BJ (cell line): ENCODE measurements at regions of chr12 and their contacts with region 1.

Region 1: DNA sequence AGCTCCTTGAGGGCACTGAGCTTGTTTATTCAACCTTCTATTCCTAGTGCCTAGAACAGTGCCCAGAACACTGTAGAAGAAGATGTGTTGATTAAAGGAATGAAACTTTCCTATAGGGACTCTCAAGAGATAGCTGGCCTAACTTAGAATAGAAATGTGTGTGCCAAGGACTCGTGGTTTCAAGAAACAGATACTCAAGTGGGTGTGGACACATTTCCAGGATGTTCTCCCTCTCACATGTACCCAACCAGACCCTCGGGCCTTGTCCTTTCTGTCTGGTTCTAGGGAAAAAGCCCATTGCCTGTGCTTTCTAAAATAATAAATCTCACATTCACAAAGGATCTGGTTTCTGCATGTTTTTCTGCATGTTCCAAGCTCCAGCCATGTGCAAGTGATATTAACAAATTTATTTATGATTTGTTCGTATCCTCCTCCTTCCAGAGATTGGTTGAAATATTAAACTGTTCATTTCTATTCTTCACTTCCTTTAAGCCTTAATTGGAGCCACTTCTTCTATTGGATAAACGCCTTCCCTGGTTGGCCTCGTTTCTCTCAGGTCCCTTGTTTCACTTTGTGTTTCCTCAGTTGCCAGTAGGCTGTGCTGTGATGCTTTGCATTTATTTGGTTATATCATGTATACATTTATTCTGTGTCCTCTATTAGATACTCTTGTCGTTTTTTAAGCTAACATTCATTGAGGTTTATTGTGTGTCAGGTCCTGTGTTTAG is 89.8 kb downstream of the CRADD start:
- DNase-seq: no peak
- H3K4me3 ChIP-seq: no peak overlapping the region
- H3K27me3 ChIP-seq: no peaks in the 10 kb centered on the region
- CTCF ChIP-seq: peak; percentile 58

Region 2: GRCh38 chr12:93569656-93570551 is 197.1 kb before region 1 on chr12:
- CTCF ChIA-PET with region 1: interaction called, 21 read pairs
- POLR2A ChIA-PET with region 1: no interaction called
- DNase-seq: no peak
- H3K4me3 ChIP-seq: peak overlapping the region; percentile 93
- H3K27me3 ChIP-seq: no peaks in the 10 kb centered on the region
- CTCF ChIP-seq: peak; percentile 93

Region 3: DNA sequence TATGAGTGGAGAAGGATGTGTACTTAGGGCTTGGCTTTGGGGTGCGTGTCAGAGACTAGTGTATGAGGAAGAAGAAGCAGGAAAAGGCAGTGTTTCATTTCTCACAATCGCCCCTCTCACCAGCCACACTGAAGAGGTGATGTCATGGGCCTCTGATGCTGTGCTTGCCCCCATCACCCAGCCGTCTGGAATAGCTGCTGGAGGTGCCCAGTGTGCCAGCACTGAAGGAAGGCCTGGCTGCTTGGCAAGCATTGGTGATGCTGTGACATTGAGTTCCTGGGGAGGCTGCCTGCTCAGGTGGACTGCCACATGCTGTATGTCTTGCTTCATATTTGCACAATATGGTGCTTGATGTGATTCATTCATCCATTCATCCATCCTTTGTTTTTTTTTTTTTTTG is 33.6 kb before region 1 on chr12:
- CTCF ChIA-PET with region 1: interaction called, 3 read pairs
- POLR2A ChIA-PET with region 1: interaction called, 14 read pairs
- DNase-seq: no peak
- H3K4me3 ChIP-seq: no peak overlapping the region
- H3K27me3 ChIP-seq: no peaks in the 10 kb centered on the region
- CTCF ChIP-seq: no peak

Region 4: DNA sequence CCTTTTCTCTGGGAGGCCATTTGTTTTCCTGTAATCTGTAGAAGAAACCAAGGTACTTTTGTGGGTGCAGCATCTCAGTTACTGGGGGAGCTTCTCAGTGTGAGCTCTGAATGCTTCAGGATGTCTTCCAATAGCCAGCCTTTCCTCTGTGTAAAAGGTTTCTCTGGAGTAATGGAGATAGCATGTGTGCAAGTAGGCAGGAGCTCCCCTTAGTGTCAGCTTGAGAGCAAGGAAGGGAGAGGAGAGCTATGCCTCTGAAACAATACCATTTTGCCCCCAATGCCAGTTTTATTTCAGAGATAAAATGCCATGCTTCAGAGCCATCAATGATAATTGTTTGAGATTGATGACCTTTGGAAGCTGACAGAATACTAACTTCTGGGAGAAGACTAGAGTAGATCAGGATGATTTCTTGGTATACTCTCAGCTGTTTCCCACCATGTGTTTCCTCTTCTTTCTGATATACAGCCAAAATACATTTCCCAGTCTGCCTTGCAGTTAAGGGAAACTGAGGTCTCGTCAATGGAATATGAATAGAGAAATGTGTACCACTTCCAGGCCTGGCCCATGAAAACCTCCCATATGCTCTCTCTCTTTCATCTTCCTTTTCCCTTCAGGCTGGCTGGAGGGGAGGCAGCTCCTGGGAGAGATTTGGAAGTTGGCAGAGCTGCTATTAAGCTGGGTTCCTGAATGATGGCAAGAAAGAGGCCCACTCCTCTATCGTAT is 35.9 kb after region 1 on chr12:
- CTCF ChIA-PET with region 1: interaction called, 17 read pairs
- POLR2A ChIA-PET with region 1: no interaction called
- DNase-seq: no peak
- H3K4me3 ChIP-seq: no peak overlapping the region
- H3K27me3 ChIP-seq: no peaks in the 10 kb centered on the region
- CTCF ChIP-seq: peak; percentile 53

Region 5: DNA sequence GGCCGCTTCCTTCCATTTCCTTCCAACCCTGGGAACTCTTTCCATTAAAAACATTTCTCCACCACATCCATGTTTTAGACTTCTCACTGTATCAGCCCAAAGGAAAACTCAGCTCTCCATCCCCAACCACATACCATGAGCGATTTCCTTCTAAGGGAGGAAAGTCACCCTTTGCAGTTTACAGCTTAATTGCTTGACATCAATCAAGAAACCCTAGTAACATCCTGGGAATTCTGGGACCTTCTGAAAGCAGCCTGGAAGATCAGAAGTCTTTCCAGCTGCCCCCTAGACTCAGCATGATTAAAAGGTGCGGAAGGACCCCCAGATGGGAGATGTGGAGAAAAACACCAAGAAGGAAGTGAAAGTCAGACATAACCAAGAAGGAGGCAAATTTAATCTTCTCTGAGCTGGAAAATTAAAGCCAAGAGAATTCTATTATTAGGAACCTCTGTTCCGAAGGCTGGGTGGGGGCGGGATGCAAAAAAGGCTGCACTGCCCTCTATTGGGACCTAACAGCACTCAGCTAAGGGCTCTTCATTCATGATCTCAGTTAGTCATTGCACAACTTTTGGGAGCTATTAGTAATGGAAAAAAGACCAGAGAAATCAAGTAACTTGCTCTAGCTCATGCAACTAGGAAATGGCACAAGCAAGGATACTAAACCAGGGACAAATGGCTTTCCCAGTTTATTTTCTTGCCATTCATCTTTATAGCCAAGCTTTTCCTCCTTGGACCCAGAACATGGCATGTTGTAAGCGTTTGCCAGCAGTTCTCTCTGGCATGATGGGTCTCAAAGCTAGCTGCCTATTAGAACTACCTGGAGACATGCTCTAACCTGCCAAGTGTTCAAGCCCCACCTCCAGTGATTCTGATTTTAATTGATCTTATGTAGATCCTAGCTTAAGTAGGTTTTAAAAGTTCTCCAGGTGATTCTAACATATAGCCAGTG is 308.3 kb after region 1 on chr12:
- CTCF ChIA-PET with region 1: interaction called, 11 read pairs
- POLR2A ChIA-PET with region 1: no interaction called
- DNase-seq: peak; percentile 63
- H3K4me3 ChIP-seq: no peak overlapping the region
- H3K27me3 ChIP-seq: no peaks in the 10 kb centered on the region
- CTCF ChIP-seq: peak; percentile 87